Activated naive CD4-positive, alpha-beta T cell treated with anti-CD3 and anti-CD28 coated beads for 36 hours (primary cell): ENCODE measurements at regions of chr19 and their contacts with region 1.

Region 1: GRCh38 chr19:29694669-29695627 is 20.1 kb downstream of the C19orf12 start:
- DNase-seq: peak; percentile 88
- H3K4me3 Mint-ChIP-seq: no peak overlapping the region
- H3K27ac Mint-ChIP-seq: no peak overlapping the region
- H3K4me1 Mint-ChIP-seq: peaks cover 11% of the 10 kb centered on the region
- H3K27me3 Mint-ChIP-seq: no peaks in the 10 kb centered on the region

Region 2: DNA sequence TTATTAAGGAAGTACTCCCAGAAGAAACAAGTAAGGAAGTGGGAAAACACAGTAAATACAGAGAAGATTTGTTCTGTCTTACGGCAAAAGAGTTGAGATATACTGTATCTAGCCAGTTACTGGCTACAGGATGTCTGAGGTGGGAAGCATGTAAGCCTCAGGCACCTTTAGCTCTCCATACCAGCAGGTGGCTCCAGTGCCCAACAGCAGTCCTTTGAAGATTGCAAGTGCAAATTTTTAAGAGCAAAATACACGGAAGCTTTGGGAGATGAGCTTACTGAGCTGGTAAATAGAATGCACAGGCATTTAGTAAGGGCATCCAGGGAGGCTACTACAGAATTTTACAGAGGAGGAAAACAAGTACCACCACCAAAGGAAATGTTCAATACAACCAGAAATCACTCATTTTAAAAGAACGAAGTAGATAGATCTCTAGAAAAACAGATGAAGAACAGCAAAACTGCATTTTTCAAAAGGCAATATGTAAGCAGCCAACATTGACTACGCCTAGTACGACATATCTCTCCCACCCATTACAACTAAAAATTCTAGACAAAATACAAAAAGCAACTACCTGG is 227.0 kb before region 1 on chr19:
- CTCF ChIA-PET with region 1: interaction called, 4 read pairs
- intact Hi-C with region 1: loop called (anchors 10 kb)
- DNase-seq: peak; percentile 51
- H3K4me3 Mint-ChIP-seq: no peak overlapping the region
- H3K27ac Mint-ChIP-seq: no peak overlapping the region
- H3K4me1 Mint-ChIP-seq: no peaks in the 10 kb centered on the region
- H3K27me3 Mint-ChIP-seq: peaks cover 21% of the 10 kb centered on the region

Region 3: GRCh38 chr19:29622138-29623070 is 72.5 kb before region 1 on chr19:
- CTCF ChIA-PET with region 1: interaction called, 16 read pairs
- intact Hi-C with region 1: no loop called
- DNase-seq: peak; percentile 23
- H3K4me3 Mint-ChIP-seq: no peak overlapping the region
- H3K27ac Mint-ChIP-seq: no peak overlapping the region
- H3K4me1 Mint-ChIP-seq: peaks cover 33% of the 10 kb centered on the region
- H3K27me3 Mint-ChIP-seq: no peaks in the 10 kb centered on the region